ENCODE measurements at regions of chr22 and their contacts with region 1.

Region 1: GRCh38 chr22:41543854-41544670 is at the start of gene POLR3H:
- DNase-seq: peak; percentile 91
- H3K4me3 ChIP-seq: peak within 1 kb of the TSS; percentile 90
- H3K27me3 ChIP-seq: no peaks in the 10 kb centered on the region
- CTCF ChIP-seq: peak; percentile 75
- polyA plus RNA-seq, gene POLR3H: 39.4 and 52.5 TPM in 2 replicates

Region 2: GRCh38 chr22:41526837-41527799 is 16.9 kb before region 1 on chr22:
- CTCF ChIA-PET with region 1: interaction called, 16 read pairs
- POLR2A ChIA-PET with region 1: no interaction called
- DNase-seq: no peak
- H3K4me3 ChIP-seq: no peak overlapping the region
- H3K27me3 ChIP-seq: no peaks in the 10 kb centered on the region
- CTCF ChIP-seq: peak; percentile 93

Region 3: GRCh38 chr22:41532908-41533825 is 10.9 kb before region 1 on chr22:
- CTCF ChIA-PET with region 1: interaction called, 16 read pairs
- POLR2A ChIA-PET with region 1: no interaction called
- DNase-seq: no peak
- H3K4me3 ChIP-seq: no peak overlapping the region
- H3K27me3 ChIP-seq: no peaks in the 10 kb centered on the region
- CTCF ChIP-seq: peak; percentile 88

Region 4: DNA sequence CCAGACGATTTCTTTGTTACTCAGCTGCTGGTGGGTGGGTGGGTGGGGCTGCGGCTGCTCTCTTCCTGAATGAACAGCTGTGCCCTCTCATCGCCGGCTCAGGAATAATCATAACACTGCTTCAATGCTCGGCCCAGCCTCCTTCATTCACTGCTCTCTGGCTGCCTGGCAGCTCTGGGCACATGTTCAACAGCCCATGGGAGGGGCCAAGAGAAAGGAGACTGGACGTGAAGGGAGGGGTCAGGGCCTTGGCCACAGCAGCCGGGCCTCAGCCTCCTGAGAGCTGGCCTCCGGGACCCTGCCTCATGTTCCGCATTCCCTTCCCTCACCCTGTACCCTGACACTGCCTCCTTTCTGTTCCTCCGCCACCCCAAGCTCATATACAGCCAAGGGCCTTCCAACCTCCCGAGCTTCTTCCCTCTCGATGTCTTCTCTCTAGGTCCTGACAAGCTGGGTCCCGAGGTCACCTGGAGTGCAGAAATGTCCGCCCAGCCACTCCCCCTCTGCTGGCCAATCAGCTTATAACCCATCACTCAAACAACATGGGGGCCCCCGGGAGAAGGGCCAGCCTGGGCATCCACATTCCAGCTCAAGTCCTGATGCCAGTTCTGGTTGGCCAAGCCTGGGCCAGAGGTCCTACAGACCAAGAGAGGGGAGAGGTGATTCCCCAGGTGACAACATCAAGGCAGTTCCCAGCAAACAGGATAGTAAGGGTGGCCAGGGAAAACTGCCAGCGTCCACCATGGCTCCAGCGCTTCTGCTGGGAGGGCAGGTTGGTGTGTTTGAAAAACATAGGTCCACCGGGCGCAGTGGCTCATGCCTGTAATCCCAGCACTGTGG is 13.6 kb after region 1 on chr22:
- CTCF ChIA-PET with region 1: interaction called, 13 read pairs
- POLR2A ChIA-PET with region 1: no interaction called
- DNase-seq: no peak
- H3K4me3 ChIP-seq: no peak overlapping the region
- H3K27me3 ChIP-seq: no peaks in the 10 kb centered on the region
- CTCF ChIP-seq: no peak

Region 5: DNA sequence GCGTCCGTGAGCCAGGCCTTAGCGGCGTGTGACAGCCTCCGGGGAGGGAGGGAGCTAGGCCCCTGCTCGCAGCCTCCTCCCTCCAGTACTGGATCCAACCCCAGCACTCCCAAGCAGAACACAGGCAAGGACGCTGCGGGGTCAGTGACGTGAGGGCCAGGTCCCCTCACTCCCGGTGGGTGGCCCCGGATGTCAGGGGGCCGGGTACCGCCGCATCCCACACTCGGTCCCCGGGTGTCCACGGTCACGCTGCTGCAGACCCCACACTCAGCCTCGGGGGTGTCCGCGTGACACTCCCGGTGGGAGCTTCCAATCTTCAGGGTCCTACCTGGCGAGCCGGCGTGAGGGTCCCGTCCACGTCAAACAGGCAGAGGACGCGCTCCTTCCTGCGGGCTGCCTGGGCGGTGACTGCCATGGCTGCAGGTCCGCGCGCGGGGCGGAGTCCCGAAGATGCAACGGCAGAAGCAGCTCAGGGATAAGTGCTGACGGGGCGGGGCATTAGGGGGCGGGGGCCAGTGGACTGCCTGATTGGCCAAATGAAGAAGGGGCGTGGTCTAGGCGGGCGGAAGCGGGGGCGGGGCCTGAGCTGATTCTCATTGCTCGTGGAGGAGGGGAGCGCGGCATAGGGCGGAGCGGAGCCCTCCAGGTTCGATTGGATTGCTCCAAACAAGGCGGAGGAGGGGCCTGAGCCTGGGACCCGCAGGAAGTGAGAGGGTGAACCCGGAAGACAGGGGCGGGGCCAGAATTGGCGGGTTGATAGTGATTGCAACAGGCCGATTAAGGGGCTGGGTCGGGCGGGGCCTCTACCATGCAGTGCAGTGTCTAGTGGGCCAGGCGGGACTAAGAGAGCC is 45.6 kb after region 1 on chr22 and contains the start of gene PMM1:
- CTCF ChIA-PET with region 1: interaction called, 13 read pairs
- POLR2A ChIA-PET with region 1: interaction called, 4 read pairs
- DNase-seq: peak; percentile 97
- H3K4me3 ChIP-seq: peak within 1 kb of the TSS; percentile 95
- H3K27me3 ChIP-seq: no peaks in the 10 kb centered on the region
- CTCF ChIP-seq: no peak
- polyA plus RNA-seq, gene PMM1: 70.7 and 109 TPM in 2 replicates

Region 6: GRCh38 chr22:41713004-41713403 is 168.9 kb after region 1 on chr22:
- CTCF ChIA-PET with region 1: no interaction called
- POLR2A ChIA-PET with region 1: no interaction called
- DNase-seq: no peak
- H3K4me3 ChIP-seq: no peak overlapping the region
- H3K27me3 ChIP-seq: peaks cover 5% of the 10 kb centered on the region
- CTCF ChIP-seq: no peak

Measured in BJ (cell line).